A673 (cell line): ENCODE measurements at regions of chr6 and their contacts with region 1.

Region 1: GRCh38 chr6:149717588-149718458 is at the start of gene LATS1:
- DNase-seq: peak; percentile 93
- H3K4me3 ChIP-seq: peak within 1 kb of the TSS; percentile 88
- H3K27ac ChIP-seq: peak within 1 kb of the TSS; percentile 98
- H3K4me1 ChIP-seq: peaks cover 8% of the 10 kb centered on the region
- H3K27me3 ChIP-seq: no peaks in the 10 kb centered on the region
- CTCF ChIP-seq: no peak
- total RNA-seq, gene LATS1: 35.2 and 39.6 TPM in 2 replicates

Region 2: DNA sequence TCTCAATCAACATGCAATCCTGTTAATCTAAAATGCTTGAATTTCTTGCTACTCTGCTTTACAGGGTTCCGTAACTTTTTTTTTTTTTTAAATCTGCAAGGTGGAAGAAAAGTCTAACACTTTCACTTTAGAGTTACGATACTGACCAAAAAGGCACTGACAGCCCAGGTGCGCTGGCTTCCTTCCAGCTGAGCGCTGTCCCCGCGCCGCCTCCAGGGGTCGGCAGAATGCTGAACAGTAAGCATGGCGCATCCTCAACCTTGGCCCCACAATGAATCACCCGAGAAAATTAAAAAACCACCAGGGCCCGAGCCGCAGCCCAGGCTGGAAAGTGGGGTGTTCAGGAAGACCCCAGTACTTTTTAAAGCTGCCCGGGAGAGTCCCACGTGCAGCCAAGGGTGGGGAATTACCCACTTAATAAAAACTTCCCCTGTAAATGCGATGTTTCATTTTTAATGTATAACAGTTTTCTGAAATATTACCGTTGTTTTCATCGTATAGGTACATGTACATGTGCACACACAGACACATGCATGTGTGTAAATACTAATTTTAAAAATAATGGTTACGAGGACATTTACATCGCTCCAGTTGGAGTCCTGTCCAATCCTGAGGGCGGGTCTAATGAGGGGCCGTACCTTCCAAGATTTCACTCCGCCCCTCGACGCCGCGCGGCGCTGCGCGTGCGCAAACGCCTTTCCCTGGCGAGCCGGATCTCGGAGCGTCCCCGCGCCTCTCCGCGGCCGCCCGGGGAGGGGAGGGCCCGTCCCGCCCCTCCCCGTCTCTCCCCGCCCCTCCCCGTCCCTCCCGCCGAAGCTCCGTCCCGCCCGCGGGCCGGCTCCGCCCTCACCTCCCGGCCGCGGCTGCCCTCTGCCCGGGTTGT is 152.1 kb before region 1 on chr6 and contains the start of gene GINM1:
- CTCF ChIA-PET with region 1: no interaction called
- POLR2A ChIA-PET with region 1: no interaction called
- intact Hi-C with region 1: loop called (anchors 10 kb)
- DNase-seq: peak; percentile 96
- H3K4me3 ChIP-seq: peak within 1 kb of the TSS; percentile 100
- H3K27ac ChIP-seq: peak within 1 kb of the TSS; percentile 87
- H3K4me1 ChIP-seq: no peaks in the 10 kb centered on the region
- H3K27me3 ChIP-seq: no peaks in the 10 kb centered on the region
- CTCF ChIP-seq: peak; percentile 77
- total RNA-seq, gene GINM1: 24.0 and 29.7 TPM in 2 replicates

Region 3: GRCh38 chr6:149863697-149864577 is 146.1 kb after region 1 on chr6 and contains the start of gene LRP11:
- CTCF ChIA-PET with region 1: no interaction called
- POLR2A ChIA-PET with region 1: no interaction called
- intact Hi-C with region 1: loop called (anchors 5 kb)
- DNase-seq: peak; percentile 88
- H3K4me3 ChIP-seq: peak within 1 kb of the TSS; percentile 92
- H3K27ac ChIP-seq: peak within 1 kb of the TSS; percentile 82
- H3K4me1 ChIP-seq: peaks cover 19% of the 10 kb centered on the region
- H3K27me3 ChIP-seq: no peaks in the 10 kb centered on the region
- CTCF ChIP-seq: no peak
- total RNA-seq, gene LRP11: 53.2 and 56.1 TPM in 2 replicates

Region 4: GRCh38 chr6:149895833-149896271 is 178.0 kb after region 1 on chr6:
- CTCF ChIA-PET with region 1: no interaction called
- POLR2A ChIA-PET with region 1: no interaction called
- intact Hi-C with region 1: no loop called
- DNase-seq: peak; percentile 95
- H3K4me3 ChIP-seq: no peak overlapping the region
- H3K27ac ChIP-seq: no peak overlapping the region
- H3K4me1 ChIP-seq: peaks cover 19% of the 10 kb centered on the region
- H3K27me3 ChIP-seq: no peaks in the 10 kb centered on the region
- CTCF ChIP-seq: no peak

Region 5: GRCh38 chr6:149984773-149985172 is 266.9 kb after region 1 on chr6:
- CTCF ChIA-PET with region 1: no interaction called
- POLR2A ChIA-PET with region 1: interaction called, 10 read pairs
- intact Hi-C with region 1: no loop called
- DNase-seq: no peak
- H3K4me3 ChIP-seq: no peak overlapping the region
- H3K27ac ChIP-seq: no peak overlapping the region
- H3K4me1 ChIP-seq: peaks cover under 1% of the 10 kb centered on the region
- H3K27me3 ChIP-seq: peaks cover 92% of the 10 kb centered on the region
- CTCF ChIP-seq: no peak

Region 6: GRCh38 chr6:150053450-150053849 is 335.6 kb after region 1 on chr6:
- CTCF ChIA-PET with region 1: no interaction called
- POLR2A ChIA-PET with region 1: interaction called, 14 read pairs
- intact Hi-C with region 1: no loop called
- DNase-seq: no peak
- H3K4me3 ChIP-seq: no peak overlapping the region
- H3K27ac ChIP-seq: no peak overlapping the region
- H3K4me1 ChIP-seq: no peaks in the 10 kb centered on the region
- H3K27me3 ChIP-seq: peaks cover 73% of the 10 kb centered on the region
- CTCF ChIP-seq: no peak